Endothelial cell of umbilical vein (primary cell): ENCODE measurements at regions of chr17 and their contacts with region 1.

Region 1: DNA sequence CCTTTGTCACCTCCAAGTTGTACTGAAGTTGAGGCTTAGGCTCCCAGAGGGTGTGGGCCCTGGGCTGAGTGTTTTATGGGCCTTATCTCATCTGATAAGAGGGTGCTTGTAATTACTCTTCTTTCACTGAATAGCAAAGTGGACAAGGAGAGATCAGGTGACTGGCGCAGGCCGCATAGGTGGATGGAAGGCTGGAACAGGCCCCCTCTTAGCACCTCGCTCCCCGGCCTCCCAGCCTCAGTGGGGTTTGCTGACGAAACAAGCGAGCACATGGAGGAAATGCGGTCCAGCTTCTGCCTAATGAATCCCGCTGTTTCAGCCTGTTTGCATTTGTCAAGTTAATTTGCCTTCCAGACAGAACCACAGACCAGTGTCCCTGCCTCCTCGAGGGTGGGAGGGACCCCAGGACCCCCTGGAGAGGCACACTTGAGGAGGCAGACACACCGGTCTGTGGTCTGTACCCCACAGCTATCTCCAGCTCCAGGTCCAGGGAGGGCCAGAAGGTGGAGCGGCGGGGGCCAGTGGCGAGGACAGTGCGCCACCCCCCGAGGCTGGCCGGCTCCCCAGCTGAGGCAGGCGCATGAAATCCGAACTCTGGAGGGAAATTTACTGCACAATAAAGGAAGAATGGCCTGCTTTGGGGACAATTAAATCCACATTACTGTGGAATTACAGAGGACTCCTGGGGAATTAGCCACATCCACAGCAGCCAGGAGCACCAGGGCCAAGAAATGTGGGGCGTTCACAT is 123.4 kb downstream of the NTN1 start:
- DNase-seq: no peak
- H3K4me3 ChIP-seq: no peak overlapping the region
- H3K27ac ChIP-seq: no peak overlapping the region
- H3K4me1 ChIP-seq: no peaks in the 10 kb centered on the region
- H3K27me3 ChIP-seq: no peaks in the 10 kb centered on the region
- CTCF ChIP-seq: no peak
- POLR2A ChIP-seq: no peak

Region 2: DNA sequence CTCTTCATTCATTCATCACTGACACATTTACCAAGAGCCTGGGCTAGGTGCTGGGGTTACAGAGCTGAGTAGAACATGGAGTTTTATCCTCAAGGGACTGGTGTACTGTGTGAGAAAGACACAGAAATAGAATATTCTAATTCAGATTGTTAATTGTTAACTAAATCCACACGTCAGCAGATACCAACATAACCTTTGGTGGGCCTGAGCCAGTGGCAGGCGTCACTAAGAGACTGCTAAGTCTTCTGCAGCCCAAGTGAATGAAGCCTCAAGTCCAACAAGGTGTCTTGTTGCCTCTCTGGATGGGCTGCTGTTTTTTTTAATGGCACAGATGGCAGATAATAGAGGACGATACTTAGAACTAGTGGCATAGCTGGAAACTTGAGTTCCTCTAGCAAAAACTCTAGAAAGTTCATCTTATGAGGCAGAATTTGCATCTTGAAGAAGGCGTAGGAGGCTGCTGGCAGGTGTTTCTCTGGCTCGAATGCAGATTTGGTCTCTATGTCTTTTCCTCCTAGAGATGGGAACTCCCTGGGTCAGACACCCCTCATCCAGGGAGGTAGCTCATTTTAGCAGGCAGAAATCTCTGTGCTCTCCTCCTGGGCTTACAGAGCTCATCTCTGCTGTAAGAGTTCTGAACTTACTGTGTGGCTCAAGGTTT is 56.2 kb after region 1 on chr17:
- CTCF ChIA-PET with region 1: interaction called, 3 read pairs
- POLR2A ChIA-PET with region 1: no interaction called
- dilution Hi-C with region 1: no loop called
- intact Hi-C with region 1: loop called (anchors 10 kb)
- DNase-seq: no peak
- H3K4me3 ChIP-seq: no peak overlapping the region
- H3K27ac ChIP-seq: no peak overlapping the region
- H3K4me1 ChIP-seq: no peaks in the 10 kb centered on the region
- H3K27me3 ChIP-seq: no peaks in the 10 kb centered on the region
- CTCF ChIP-seq: no peak
- POLR2A ChIP-seq: no peak